Heart left ventricle (tissue), 16 donors: ENCODE measurements at regions of chr1 and their contacts with region 1.

Region 1: DNA sequence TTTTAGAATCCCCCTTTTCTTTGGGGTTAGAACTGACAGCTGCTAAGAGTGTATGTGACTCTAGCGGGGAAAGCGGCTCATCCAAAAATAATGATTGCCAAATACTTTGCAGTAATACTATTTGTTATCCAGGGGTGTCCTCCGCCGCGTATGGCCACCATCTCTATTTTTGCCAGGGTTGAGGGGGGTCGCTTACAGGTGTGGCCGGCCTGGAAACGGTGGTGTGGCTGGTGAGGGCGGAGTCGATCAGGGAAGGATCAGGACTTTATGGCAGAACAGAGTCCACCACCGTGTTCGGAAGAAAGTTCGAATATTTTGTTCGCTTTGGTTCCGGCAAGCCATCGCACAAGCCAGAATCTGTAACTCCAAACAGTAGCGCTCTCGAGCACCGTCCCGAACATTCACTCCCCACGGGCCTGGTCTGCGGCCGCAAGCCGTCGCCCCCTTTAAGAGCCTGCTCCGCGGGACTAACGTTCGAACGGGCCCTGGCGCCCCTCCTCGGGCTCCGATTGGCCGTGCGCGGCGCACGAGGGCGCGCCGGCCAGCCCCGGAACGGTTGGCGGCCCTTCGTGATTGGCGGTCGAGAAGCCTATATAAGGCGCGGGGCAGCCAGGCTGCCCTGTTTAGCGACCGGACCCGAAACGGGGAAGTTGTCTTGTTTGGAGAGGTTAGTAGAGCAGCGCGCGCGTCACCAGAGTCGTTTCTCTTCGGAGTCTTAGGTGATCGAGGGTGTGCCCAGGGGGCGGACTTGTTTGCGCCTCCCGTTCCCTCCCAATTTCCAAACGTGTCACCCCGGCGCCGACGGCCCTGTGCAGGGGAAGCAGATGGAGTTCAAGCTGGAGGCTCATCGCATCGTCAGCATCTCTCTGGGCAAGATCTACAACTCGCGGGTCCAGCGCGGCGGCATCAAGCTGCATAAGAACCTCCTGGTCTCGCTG is at the start of gene IER5:
- DNase-seq: peak; percentile 96 to 97 (median 97)
- ATAC-seq: peak; percentile 89 to 95 (median 92)
- H3K4me3 ChIP-seq: peak within 1 kb of the TSS; percentile 65 to 95 (median 88)
- H3K27ac ChIP-seq: peak within 1 kb of the TSS; percentile 82 to 98 (median 94)
- H3K4me1 ChIP-seq: peaks cover 5 to 51% (median 28%) of the 10 kb centered on the region in 12 donors
- H3K27me3 ChIP-seq: no peaks in the 10 kb centered on the region
- CTCF ChIP-seq: peak in 3 of 12 donors; percentile 21 to 23 (median 21)
- POLR2A ChIP-seq: peak; percentile 99 to 100
- total RNA-seq, gene IER5: 12.8 to 22.7 (median 18.4) TPM

Region 2: GRCh38 chr1:180881806-180882509 is 206.4 kb before region 1 on chr1:
- intact Hi-C with region 1: loop called in 1 of 10 experiments (anchors 10 kb)
- DNase-seq: no peak
- ATAC-seq: peak in 3 of 4 donors; percentile 45 to 69 (median 55)
- H3K4me3 ChIP-seq: no peak overlapping the region
- H3K27ac ChIP-seq: peak overlapping the region in 1 of 12 donors; percentile 33
- H3K4me1 ChIP-seq: peaks cover 0 to 8% (median 0%) of the 10 kb centered on the region in 12 donors
- H3K27me3 ChIP-seq: no peaks in the 10 kb centered on the region
- CTCF ChIP-seq: peak in 11 of 12 donors; percentile 28 to 63 (median 47)
- POLR2A ChIP-seq: no peak

Region 3: GRCh38 chr1:181021811-181022434 is 66.4 kb before region 1 on chr1:
- intact Hi-C with region 1: loop called in 1 of 10 experiments (anchors 5 kb)
- DNase-seq: peak; percentile 72 to 79 (median 75)
- ATAC-seq: peak; percentile 23 to 70 (median 62)
- H3K4me3 ChIP-seq: peak overlapping the region; percentile 50 to 97 (median 76)
- H3K27ac ChIP-seq: peak overlapping the region; percentile 65 to 94 (median 86)
- H3K4me1 ChIP-seq: peaks cover 0 to 42% (median 17%) of the 10 kb centered on the region in 12 donors
- H3K27me3 ChIP-seq: peaks cover 0 to 4% (median 0%) of the 10 kb centered on the region in 9 donors
- CTCF ChIP-seq: no peak
- POLR2A ChIP-seq: no peak

Region 4: GRCh38 chr1:181105134-181106021 is 17.0 kb after region 1 on chr1:
- intact Hi-C with region 1: loop called in 3 of 10 experiments (anchors 2 kb)
- DNase-seq: peak; percentile 96 to 99 (median 97)
- ATAC-seq: peak; percentile 86 to 97 (median 94)
- H3K4me3 ChIP-seq: peak overlapping the region; percentile 48 to 89 (median 71)
- H3K27ac ChIP-seq: peak overlapping the region; percentile 68 to 95 (median 90)
- H3K4me1 ChIP-seq: peaks cover 0 to 72% (median 29%) of the 10 kb centered on the region in 12 donors
- H3K27me3 ChIP-seq: no peaks in the 10 kb centered on the region
- CTCF ChIP-seq: no peak
- POLR2A ChIP-seq: peak in 1 of 2 donors; percentile 56

Region 5: GRCh38 chr1:181152892-181153633 is 64.7 kb after region 1 on chr1:
- intact Hi-C with region 1: loop called in 2 of 10 experiments (anchors 2 kb)
- DNase-seq: peak; percentile 89 to 96 (median 91)
- ATAC-seq: peak; percentile 94 to 97 (median 96)
- H3K4me3 ChIP-seq: peak overlapping the region in 2 of 12 donors; percentile 5 to 7
- H3K27ac ChIP-seq: peak overlapping the region; percentile 87 to 97 (median 94)
- H3K4me1 ChIP-seq: peaks cover 14 to 56% (median 27%) of the 10 kb centered on the region in 12 donors
- H3K27me3 ChIP-seq: no peaks in the 10 kb centered on the region
- CTCF ChIP-seq: peak in 11 of 12 donors; percentile 27 to 68 (median 45)
- POLR2A ChIP-seq: peak in 1 of 2 donors; percentile 46